ENCODE measurements at regions of chr1 and their contacts with region 1.

Region 1: GRCh38 chr1:203486618-203487370 is 7.2 kb upstream of the OPTC start:
- DNase-seq: no peak
- ATAC-seq: no peak
- H3K4me3 Mint-ChIP-seq: no peak overlapping the region
- H3K27ac Mint-ChIP-seq: no peak overlapping the region
- H3K4me1 Mint-ChIP-seq: peaks cover 4% of the 10 kb centered on the region
- H3K27me3 Mint-ChIP-seq: peaks cover under 1% of the 10 kb centered on the region

Region 2: DNA sequence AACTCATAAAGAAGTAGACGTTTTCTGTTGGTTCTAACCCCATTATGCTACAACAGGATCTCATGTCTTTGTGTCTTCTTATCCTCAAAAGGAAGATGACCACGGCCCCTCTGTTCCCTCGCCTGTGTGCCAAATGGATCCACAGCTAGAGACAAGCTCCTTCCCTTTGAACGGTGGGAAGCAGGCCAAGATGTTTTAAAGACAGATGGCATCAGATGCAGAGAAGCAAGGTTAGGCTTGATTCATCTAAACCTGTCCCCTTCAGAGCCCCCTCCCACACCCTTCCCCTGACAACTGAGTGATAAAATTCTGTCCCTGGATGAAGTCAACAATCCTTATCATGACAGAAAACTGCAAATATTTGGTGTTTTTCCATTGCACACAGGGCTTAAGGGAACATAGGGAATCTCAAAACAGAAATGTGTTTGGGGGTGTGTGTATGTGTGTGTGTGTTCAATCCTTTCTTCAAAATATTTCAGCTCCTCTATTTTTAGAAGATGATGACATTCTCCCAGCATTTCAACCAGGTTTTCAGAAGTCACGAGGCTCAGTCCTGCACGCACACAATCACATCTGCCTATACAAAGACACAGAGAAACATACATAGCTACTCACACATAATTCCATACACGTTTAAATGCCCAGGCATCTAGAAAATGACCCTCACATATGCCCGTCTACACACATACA is 108.1 kb before region 1 on chr1:
- CTCF ChIA-PET with region 1: no interaction called
- DNase-seq: no peak
- ATAC-seq: no peak
- H3K4me3 Mint-ChIP-seq: no peak overlapping the region
- H3K27ac Mint-ChIP-seq: no peak overlapping the region
- H3K4me1 Mint-ChIP-seq: no peaks in the 10 kb centered on the region
- H3K27me3 Mint-ChIP-seq: peaks cover 23% of the 10 kb centered on the region

Region 3: GRCh38 chr1:203422656-203423055 is 64.1 kb before region 1 on chr1:
- CTCF ChIA-PET with region 1: no interaction called
- DNase-seq: no peak
- ATAC-seq: no peak
- H3K4me3 Mint-ChIP-seq: no peak overlapping the region
- H3K27ac Mint-ChIP-seq: no peak overlapping the region
- H3K4me1 Mint-ChIP-seq: no peaks in the 10 kb centered on the region
- H3K27me3 Mint-ChIP-seq: peaks cover 42% of the 10 kb centered on the region

Region 4: GRCh38 chr1:203475012-203475981 is 11.5 kb before region 1 on chr1 and contains the start of gene PRELP:
- CTCF ChIA-PET with region 1: interaction called, 35 read pairs
- DNase-seq: no peak
- ATAC-seq: no peak
- H3K4me3 Mint-ChIP-seq: no peak within 1 kb of the TSS
- H3K27ac Mint-ChIP-seq: no peak within 1 kb of the TSS
- H3K4me1 Mint-ChIP-seq: peaks cover 7% of the 10 kb centered on the region
- H3K27me3 Mint-ChIP-seq: peaks cover 54% of the 10 kb centered on the region
- total RNA-seq, gene PRELP: not detected

Region 5: DNA sequence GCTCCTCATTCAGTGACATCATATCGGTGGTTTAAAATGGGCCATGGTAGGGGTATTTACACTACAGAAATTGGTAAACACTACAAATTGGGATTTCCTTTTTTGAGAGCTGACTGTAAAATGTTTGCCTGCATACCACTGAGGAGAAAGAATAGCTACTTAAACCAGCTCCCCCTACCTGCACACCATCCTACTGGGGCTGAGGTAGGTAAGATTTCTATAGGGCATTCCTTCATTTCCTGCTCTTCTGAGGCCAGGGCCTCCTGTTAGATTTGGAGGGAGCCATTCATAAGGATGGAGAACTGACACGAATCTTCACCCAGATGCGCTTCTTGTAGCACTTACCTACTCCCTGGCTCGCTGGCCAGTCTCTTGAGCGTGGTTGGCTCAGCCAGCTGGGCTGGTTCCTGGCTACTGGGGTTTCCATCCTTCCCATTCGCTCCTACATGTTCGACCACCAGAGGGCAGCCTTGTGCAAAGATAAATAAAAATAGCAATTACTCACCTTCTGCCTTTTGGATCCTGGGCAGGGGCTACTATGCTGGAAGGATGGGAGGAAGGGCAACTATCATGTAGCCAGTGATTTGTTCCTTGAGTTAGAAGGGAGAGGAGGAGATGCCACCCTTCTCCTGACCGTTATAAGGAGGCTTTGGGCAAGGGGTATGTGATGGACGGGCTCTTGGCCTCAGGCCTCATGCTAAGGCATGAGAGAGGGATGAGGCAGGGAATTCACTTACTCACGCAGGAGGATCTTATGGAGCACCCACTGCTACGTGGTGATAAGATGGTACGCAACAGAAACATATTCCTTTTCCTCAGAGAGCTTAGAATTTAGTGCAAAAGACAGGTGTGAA is 17.8 kb after region 1 on chr1:
- CTCF ChIA-PET with region 1: interaction called, 20 read pairs
- DNase-seq: peak; percentile 84
- ATAC-seq: peak; percentile 85
- H3K4me3 Mint-ChIP-seq: no peak overlapping the region
- H3K27ac Mint-ChIP-seq: no peak overlapping the region
- H3K4me1 Mint-ChIP-seq: peaks cover 6% of the 10 kb centered on the region
- H3K27me3 Mint-ChIP-seq: peaks cover 14% of the 10 kb centered on the region

Measured in activated CD8-positive, alpha-beta memory T cell treated with anti-CD3 and anti-CD28 coated beads, Interleukin-2, amount 10 ng/mL, durations not matched to agents 7 days and 5 days (primary cell).